ENCODE measurements at regions of chr20 and their contacts with region 1.

Region 1: DNA sequence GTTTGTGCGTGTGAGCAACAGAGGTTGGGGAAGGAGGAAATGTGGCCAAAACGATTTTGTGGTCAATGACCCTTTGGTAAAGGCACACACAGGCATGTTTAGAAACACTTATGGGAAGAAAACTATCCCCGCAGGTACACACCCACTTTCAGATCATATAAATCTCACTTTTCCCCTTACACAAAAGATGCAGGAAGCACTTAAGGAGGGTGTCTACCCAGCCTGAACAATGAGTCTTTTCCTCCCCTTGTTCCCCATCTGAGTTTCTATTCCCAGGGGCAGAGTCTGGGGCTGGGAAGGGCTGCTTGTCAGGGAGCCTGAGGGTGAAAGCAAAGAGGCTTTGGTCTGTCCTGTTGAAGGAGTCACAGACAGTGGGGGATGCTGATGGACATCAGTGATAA is 193.2 kb upstream of the SALL4 start:
- DNase-seq: no peak
- H3K4me3 ChIP-seq: no peak overlapping the region
- H3K27ac ChIP-seq: no peak overlapping the region
- H3K4me1 ChIP-seq: no peaks in the 10 kb centered on the region
- H3K27me3 ChIP-seq: no peaks in the 10 kb centered on the region

Region 2: DNA sequence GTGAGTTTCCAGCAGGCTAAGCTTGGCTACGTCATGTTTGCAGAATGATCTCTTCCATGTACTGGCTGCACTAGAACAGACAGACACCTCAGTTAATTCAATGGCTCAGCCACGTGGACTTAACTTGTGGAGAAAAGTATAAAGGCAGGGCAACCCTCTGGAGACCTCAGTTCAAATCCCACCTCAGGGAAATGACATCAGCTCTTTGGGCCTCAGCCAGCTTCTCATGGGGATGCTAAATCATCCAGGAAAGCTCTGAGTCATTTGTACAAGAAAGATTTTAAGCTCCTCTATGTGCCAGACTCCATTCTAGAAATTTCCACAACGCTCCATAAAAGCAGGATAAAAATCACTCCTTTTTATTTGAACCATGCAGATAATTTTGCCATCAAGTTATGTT is 64.8 kb before region 1 on chr20:
- in situ Hi-C with region 1: loop called (anchors 10 kb)
- DNase-seq: peak; percentile 77
- H3K4me3 ChIP-seq: no peak overlapping the region
- H3K27ac ChIP-seq: no peak overlapping the region
- H3K4me1 ChIP-seq: 0 out of 2 replicates have a peak, but pooled peaks cover 4% of the 10 kb centered on the region
- H3K27me3 ChIP-seq: no peaks in the 10 kb centered on the region

Region 3: DNA sequence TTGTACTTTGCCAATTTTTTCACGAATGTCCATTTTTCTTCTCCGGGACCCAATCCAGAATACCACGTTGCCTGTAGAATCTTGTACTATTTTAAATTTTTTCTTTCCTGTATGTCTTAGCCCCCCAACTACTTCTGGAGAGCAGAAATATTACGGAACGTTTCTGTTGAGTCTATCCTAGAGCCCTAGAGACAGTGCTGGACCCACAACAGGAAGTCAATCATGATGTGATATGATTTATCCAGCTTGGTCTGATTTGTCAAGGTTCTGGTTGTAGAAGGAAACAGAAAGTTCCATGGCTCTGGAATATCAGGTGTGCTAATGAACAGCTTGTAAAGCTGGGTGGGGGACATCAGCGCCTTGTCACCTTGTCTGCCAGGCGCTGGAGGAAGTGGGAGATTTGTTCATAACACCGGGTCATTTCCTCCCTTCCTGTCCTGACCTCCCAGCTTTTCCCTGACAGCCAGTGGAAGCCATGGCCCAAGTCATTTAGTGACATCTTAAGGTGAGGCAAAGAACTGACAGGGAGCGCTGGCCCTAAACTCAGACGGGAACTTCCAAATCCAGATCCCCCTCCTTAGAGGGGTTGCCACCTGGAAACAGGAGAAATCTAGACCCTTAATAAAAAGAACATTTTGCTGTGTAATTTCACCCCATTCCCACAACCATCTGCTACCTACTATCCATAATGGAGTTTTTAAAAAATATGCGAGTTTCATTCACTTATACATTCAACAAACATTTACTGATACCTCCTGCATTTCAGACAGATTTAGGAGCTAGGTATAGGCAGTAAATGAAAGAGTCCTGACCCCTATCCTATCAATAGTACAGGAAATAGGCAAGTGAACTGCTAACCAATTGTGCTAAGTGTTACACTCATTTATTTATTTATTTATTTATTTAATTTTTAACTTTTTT is 65.5 kb after region 1 on chr20:
- in situ Hi-C with region 1: no loop called
- DNase-seq: peak; percentile 27
- H3K4me3 ChIP-seq: no peak overlapping the region
- H3K27ac ChIP-seq: no peak overlapping the region
- H3K4me1 ChIP-seq: peaks cover 4% of the 10 kb centered on the region
- H3K27me3 ChIP-seq: no peaks in the 10 kb centered on the region

Region 4: GRCh38 chr20:52342913-52343312 is 347.4 kb after region 1 on chr20:
- in situ Hi-C with region 1: no loop called
- DNase-seq: no peak
- H3K4me3 ChIP-seq: no peak overlapping the region
- H3K27ac ChIP-seq: no peak overlapping the region
- H3K4me1 ChIP-seq: no peaks in the 10 kb centered on the region
- H3K27me3 ChIP-seq: peaks cover 23% of the 10 kb centered on the region; the same call in 1 of the 2 replicates

Measured in GM23248 (cell line).